ENCODE measurements at regions of chr17 and their contacts with region 1.

Region 1: DNA sequence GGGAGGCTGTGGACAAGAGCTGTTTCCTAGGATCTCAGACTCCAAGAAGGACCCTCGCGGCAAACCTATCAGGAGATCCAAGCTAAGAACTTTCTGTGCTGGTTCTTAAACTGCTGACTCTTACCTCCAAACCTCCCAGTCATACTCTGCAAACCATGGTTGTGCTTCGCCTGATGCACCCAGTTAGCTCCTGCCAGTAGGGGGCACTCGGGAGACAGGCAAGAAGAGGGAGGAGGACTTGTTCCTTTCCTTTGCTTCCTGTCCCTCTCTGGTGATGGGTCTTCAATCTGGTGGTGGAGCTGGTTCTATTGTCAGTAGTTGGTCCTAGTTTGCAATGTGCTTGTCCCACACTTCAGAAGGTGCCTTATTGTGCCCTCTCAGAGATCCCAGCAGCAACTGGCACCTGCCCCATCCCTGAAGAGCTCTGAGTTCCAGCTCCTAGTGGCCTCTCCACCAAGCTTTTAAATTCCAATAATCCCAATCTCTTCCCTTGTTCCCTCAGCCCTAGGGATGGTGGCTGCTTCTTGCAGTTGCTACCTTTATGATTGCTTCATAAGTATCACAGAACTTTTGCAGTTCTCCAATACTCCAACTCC is 113.5 kb upstream of the RPL38 start:
- DNase-seq: peak; percentile 95
- ATAC-seq: peak; percentile 93
- H3K4me3 Mint-ChIP-seq: no peak overlapping the region
- H3K27ac Mint-ChIP-seq: no peak overlapping the region
- H3K4me1 Mint-ChIP-seq: no peaks in the 10 kb centered on the region
- H3K27me3 Mint-ChIP-seq: peaks cover 13% of the 10 kb centered on the region; the same call in 1 of the 2 replicates
- CTCF ChIP-seq: peak; percentile 76

Region 2: DNA sequence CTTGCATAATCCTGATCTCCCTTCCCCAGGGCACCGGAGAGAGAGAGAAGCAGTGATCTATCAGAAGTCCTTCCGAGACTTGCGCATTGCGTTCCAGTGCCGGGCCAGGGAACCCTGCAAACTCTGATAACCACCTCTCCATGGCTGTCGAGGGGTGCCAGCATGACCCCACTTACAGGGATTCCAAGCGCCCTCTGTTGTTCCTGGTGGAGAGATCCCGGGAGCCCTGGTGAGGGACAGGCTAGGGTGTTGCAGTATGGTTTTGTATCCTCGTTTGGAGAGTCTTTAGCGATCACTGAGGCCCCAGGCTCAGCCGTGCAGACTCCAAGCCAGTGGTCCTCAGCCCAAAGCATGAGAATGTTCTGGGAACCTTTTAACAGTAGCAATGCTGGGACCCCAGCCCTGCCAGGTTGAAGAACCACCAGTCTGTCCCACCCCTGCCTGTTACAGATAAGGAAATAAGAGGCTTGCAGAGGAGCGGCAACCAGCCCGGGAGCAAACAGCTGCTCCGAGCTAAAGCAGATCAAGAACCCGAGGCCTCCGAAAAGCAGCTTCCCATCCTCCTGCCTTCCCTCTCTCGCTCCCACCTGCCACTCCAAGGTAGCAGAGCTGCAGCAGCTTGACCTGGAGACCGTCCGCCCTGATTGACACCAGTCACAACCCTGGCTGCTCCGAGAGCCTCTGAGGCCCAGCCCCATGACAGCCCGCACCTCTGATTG is 36.8 kb before region 1 on chr17:
- CTCF ChIA-PET with region 1: interaction called, 10 read pairs
- POLR2A ChIA-PET with region 1: no interaction called
- DNase-seq: peak; percentile 20
- ATAC-seq: peak; percentile 72
- H3K4me3 Mint-ChIP-seq: no peak overlapping the region
- H3K27ac Mint-ChIP-seq: no peak overlapping the region; the same call in 1 of the 2 replicates
- H3K4me1 Mint-ChIP-seq: peaks cover 15% of the 10 kb centered on the region
- H3K27me3 Mint-ChIP-seq: peaks cover 4% of the 10 kb centered on the region
- CTCF ChIP-seq: no peak

Region 3: GRCh38 chr17:74110467-74110866 is 20.5 kb after region 1 on chr17:
- CTCF ChIA-PET with region 1: interaction called, 100 read pairs
- POLR2A ChIA-PET with region 1: no interaction called
- DNase-seq: no peak
- ATAC-seq: no peak
- H3K4me3 Mint-ChIP-seq: no peak overlapping the region
- H3K27ac Mint-ChIP-seq: no peak overlapping the region
- H3K4me1 Mint-ChIP-seq: peaks cover 32% of the 10 kb centered on the region
- H3K27me3 Mint-ChIP-seq: peaks cover 8% of the 10 kb centered on the region; the same call in 1 of the 2 replicates
- CTCF ChIP-seq: no peak

Region 4: DNA sequence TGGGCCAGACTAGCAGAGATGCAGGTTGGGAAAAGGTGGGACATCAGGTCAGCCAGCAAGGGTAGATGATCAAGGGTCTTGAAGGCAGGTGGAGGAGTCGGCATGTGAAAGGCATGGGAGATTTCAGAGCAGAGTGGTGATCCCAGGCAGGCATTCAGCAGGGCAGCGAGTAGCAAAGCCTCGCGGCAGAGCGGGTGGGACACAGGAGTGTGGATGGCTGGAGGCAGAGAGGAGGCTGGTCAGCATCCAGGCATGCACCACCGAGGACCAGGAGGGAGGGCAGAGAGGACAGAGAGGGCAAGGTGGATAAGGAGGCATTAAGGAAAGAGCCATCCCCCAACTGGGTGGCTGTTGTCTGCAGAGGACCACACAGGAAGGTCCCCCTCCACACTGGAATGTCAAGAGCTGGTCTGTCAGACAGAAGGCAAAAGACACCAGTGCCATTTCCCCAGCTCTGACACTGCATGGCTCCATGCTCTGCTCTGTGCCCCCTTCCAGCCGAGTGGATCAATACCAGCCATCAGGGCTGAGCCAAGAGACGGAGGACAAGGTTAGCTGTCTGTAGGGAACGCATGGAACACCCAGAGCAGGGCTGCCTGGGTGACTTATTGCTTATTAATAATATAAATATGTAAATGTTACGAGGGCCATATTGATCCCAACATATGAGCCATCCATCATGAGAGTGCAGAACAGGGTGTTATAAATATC is 38.7 kb after region 1 on chr17:
- CTCF ChIA-PET with region 1: interaction called, 21 read pairs
- POLR2A ChIA-PET with region 1: no interaction called
- DNase-seq: no peak
- ATAC-seq: no peak
- H3K4me3 Mint-ChIP-seq: no peak overlapping the region
- H3K27ac Mint-ChIP-seq: no peak overlapping the region
- H3K4me1 Mint-ChIP-seq: peaks cover 17% of the 10 kb centered on the region
- H3K27me3 Mint-ChIP-seq: peaks cover 6% of the 10 kb centered on the region; the same call in 1 of the 2 replicates
- CTCF ChIP-seq: no peak

Region 5: DNA sequence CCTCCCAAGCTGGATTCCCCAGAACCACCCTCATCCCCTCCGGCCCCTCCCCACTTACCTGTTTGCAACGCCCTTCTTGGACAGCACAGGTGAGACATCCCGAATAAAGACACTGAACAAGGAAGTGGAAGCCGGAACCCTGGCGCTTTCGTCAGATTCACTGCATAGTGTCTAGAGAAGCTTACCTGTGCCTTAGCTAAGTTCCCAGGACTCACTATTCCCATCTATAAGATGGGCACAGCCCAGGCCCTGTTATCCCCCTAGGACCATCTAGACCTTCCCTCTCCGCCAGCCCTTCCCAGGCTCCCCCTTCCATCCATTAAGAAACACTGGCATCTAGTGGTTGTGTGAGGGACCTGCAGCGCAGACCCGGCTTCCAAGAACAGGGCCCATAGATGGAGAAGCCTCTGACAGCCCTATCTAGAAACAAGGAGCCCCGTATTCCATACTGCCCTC is 86.6 kb after region 1 on chr17:
- CTCF ChIA-PET with region 1: interaction called, 37 read pairs
- POLR2A ChIA-PET with region 1: no interaction called
- DNase-seq: peak; percentile 81
- ATAC-seq: peak; percentile 89
- H3K4me3 Mint-ChIP-seq: no peak overlapping the region
- H3K27ac Mint-ChIP-seq: no peak overlapping the region
- H3K4me1 Mint-ChIP-seq: peaks cover 9% of the 10 kb centered on the region; the same call in 1 of the 2 replicates
- H3K27me3 Mint-ChIP-seq: peaks cover 4% of the 10 kb centered on the region
- CTCF ChIP-seq: peak; percentile 81

Region 6: DNA sequence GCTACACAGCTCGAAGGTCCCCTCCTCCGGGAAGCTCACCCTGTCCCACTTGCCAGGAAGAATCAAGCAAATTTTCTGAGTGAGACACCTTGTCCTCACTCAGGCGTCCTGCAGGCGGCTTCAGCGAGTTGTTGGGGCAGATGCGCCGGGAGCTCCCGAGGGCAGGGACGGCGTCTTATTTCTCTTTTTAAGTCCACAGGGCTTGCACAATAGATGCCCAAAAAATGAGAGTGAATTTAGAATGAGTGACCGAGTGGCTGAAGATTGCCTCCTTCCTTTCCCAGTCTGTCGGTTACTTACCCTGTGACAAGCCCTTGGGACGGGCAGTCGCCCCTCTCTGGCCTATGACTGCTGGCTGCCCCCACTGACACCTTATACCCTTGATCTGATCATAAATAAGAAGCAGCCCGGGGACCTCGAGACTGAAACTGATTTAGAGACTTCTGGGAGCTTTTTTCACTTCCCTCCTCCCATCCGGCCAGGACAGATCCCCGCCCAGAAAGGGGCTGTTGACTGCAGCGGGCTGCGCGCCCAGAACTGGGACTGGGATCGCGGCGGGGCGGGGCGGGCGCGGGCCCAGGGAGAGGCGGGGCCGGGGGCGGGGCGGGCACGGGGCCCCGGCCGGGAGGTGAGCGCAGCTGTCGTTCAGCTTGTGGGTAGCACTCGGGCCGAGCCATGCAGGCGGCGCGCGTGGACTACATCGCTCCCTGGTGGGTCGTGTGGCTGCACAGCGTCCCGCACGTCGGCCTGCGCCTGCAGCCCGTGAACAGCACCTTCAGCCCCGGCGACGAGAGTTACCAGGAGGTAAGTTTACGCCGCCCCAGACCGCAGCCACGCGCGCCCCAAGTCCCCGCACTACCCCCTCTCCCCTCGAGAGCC is 123.2 kb after region 1 on chr17 and contains the start of gene TTYH2:
- CTCF ChIA-PET with region 1: no interaction called
- POLR2A ChIA-PET with region 1: no interaction called
- DNase-seq: peak; percentile 74
- ATAC-seq: peak; percentile 34
- H3K4me3 Mint-ChIP-seq: peak within 1 kb of the TSS; percentile 93
- H3K27ac Mint-ChIP-seq: peak within 1 kb of the TSS; percentile 65
- H3K4me1 Mint-ChIP-seq: peaks cover 45% of the 10 kb centered on the region
- H3K27me3 Mint-ChIP-seq: peaks cover 37% of the 10 kb centered on the region
- CTCF ChIP-seq: no peak
- total RNA-seq, gene TTYH2: 3.5 to 5.1 TPM (median 4.5 TPM) in 3 replicates

Measured in WTC11 (cell line).